Calu3 (cell line): ENCODE measurements at regions of chr2 and their contacts with region 1.

Region 1: DNA sequence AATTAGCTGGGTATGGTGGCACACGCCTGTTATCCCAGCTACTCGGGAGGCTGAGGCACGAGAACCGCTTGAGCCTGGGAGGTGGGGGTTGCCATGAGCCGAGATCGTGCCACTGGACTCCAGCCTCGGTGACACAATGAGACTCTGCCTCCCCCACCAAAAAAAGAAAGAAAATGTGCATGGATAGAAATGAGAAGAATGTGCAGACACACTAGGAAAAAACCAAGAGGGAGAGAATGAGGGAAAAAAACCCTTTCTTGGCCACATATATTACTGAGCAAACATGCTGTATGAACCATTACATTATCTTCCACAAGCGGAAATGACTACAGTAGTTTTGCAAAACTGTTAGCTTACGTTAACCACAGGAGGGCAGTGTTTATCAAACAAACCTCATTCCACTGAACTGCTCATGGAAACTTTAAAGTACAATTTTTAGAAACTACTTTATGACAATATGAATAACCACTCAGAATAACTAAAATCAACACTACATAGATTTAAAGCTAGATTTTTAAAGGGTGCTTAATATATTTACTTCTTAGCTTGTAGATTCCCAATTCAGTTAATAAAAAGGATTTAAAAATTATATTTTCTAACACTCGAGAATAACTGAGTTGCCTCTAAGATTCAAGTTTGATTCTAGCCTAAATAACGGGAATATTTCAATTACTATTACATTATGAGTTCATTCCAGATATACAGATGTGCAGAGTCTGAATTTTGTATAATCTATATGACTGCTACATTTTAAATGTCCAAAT is 26.4 kb downstream of the ASXL2 start:
- DNase-seq: peak; percentile 34
- H3K4me3 Mint-ChIP-seq: peak overlapping the region; percentile 66
- H3K27ac Mint-ChIP-seq: peak overlapping the region; percentile 70
- H3K4me1 Mint-ChIP-seq: peaks cover 24% of the 10 kb centered on the region
- H3K27me3 Mint-ChIP-seq: no peaks in the 10 kb centered on the region
- CTCF ChIP-seq: no peak

Region 2: GRCh38 chr2:25772078-25772477 is 79.8 kb before region 1 on chr2:
- CTCF ChIA-PET with region 1: no interaction called
- intact Hi-C with region 1: no loop called
- DNase-seq: no peak
- H3K4me3 Mint-ChIP-seq: no peak overlapping the region
- H3K27ac Mint-ChIP-seq: no peak overlapping the region
- H3K4me1 Mint-ChIP-seq: no peaks in the 10 kb centered on the region
- H3K27me3 Mint-ChIP-seq: no peaks in the 10 kb centered on the region
- CTCF ChIP-seq: no peak

Region 3: DNA sequence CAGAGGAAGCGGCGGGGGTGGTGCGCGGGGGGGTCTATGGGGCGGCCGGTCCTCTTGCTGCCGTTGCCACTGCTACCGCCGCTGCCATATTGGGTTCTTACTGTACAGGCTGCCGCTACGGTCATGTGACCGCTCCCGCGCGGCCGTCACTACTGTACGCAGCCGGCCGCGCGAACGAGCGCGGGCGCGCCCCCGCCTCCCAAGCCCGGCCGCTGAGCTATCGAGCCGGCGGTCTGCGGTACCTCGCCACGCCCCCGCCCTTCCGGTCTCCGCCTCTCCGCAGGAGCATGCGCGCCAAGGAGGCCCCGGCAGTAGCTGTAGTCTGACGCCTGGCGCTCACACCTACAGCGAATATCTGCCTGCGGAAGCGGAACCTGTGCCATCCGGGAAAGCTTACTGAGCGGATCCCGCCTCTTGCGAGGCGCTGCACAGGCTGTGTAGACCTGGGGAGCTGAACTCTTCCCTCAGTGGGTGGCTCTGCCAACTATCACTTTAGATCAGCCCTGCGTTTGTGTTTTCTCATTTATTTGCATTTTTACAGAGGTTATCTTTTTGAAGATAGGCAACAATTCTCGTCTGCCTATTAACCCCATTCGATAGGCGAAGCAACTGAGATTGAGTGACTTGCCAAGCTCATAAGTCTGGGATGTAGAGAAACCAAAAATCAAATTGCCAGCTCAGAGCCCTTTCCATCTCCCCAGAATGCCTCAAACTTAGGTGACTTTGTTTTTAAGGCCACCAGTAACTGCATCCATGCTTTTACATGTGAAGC is 26.6 kb after region 1 on chr2 and contains the start of gene ASXL2:
- CTCF ChIA-PET with region 1: interaction called, 10 read pairs
- intact Hi-C with region 1: no loop called
- DNase-seq: peak; percentile 98
- H3K4me3 Mint-ChIP-seq: peak within 1 kb of the TSS; percentile 99
- H3K27ac Mint-ChIP-seq: peak within 1 kb of the TSS; percentile 98
- H3K4me1 Mint-ChIP-seq: peaks cover 19% of the 10 kb centered on the region
- H3K27me3 Mint-ChIP-seq: no peaks in the 10 kb centered on the region
- CTCF ChIP-seq: no peak
- total RNA-seq, gene ASXL2: 42.4 and 42.8 TPM in 2 replicates

Region 4: GRCh38 chr2:25936889-25937545 is 85.1 kb after region 1 on chr2:
- CTCF ChIA-PET with region 1: interaction called, 3 read pairs
- intact Hi-C with region 1: loop called (anchors 5 kb)
- DNase-seq: no peak
- H3K4me3 Mint-ChIP-seq: no peak overlapping the region
- H3K27ac Mint-ChIP-seq: no peak overlapping the region
- H3K4me1 Mint-ChIP-seq: peaks cover 13% of the 10 kb centered on the region
- H3K27me3 Mint-ChIP-seq: no peaks in the 10 kb centered on the region
- CTCF ChIP-seq: no peak